ENCODE measurements at regions of chr13 and their contacts with region 1.

Region 1: DNA sequence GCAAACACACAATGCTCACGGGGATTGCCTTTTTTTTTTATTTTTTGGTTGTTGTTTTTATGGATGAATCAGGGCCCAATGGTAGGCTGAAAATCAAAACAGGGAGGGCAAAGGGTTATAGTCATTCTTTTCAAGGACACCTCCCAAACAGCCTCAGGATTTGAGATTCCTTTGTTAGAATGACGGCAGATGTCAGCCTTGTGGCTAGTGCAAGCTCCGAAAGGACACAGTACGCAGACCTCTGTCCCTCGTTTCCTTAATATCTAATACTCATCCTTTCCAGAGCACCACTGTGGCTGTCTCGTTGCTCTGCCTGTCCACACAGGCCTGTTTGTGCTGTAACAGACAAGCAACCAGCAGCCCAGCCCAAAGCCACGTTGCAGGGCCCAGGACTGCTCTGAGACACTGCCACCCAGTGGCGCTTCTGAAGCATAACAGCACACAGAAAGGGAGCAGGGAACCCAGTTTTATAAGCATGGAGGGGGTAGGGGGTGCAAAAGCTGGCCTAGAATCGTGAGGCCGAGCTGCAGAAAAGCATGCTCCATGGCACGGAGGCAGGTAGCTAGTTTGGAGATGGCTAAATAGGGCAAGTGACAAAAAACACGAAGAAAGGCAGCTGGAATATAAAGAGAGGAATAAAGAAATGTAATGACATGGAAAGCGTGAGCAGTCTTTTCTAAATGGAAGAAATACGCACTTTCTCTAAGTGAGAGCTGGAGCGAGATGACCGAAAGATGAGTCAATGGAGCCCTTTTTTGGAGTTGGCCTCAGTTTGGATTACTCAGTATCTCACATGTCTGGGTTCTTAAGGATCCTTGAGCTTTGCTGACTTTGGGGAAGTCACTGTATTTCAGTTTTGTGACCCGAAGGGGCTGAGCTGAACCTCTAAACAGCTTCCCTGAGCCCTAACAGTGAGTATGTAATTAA is 40.7 kb upstream of the MEDAG start:
- DNase-seq: peak; percentile 64 to 81
- ATAC-seq: peak; percentile 95 to 98
- H3K4me3 ChIP-seq: no peak overlapping the region
- H3K27ac ChIP-seq: peak overlapping the region; percentile 68 to 81
- H3K4me1 ChIP-seq: peaks cover 17% of the 10 kb centered on the region
- CTCF ChIP-seq: peak; percentile 65
- EP300 ChIP-seq: no peak
- POLR2A ChIP-seq: no peak
- RAD21 ChIP-seq: peak; percentile 77 to 82

Region 2: DNA sequence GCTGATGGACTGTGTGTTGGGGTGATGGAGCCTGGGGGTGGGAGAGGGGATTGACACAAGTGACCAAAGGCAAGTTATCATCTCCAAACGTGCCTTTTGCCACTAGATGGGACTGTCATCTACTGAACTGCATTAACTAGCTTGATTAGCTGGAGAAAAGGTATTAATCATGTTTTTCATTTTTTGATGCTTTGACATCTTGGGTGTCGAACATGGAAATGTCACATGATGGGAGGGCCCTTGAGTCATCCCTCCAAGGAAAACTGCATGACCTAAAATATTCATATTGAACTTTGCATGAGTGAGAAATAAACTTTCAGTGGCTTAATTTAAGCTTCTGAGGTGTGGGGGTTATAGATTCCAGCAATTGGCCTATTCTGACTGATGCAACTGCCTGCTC is 56.8 kb before region 1 on chr13:
- CTCF ChIA-PET with region 1: interaction called, 14 read pairs
- POLR2A ChIA-PET with region 1: no interaction called
- DNase-seq: no peak
- ATAC-seq: no peak
- H3K4me3 ChIP-seq: no peak overlapping the region
- H3K27ac ChIP-seq: no peak overlapping the region
- H3K4me1 ChIP-seq: no peaks in the 10 kb centered on the region
- CTCF ChIP-seq: no peak
- EP300 ChIP-seq: no peak
- POLR2A ChIP-seq: no peak
- RAD21 ChIP-seq: no peak

Region 3: DNA sequence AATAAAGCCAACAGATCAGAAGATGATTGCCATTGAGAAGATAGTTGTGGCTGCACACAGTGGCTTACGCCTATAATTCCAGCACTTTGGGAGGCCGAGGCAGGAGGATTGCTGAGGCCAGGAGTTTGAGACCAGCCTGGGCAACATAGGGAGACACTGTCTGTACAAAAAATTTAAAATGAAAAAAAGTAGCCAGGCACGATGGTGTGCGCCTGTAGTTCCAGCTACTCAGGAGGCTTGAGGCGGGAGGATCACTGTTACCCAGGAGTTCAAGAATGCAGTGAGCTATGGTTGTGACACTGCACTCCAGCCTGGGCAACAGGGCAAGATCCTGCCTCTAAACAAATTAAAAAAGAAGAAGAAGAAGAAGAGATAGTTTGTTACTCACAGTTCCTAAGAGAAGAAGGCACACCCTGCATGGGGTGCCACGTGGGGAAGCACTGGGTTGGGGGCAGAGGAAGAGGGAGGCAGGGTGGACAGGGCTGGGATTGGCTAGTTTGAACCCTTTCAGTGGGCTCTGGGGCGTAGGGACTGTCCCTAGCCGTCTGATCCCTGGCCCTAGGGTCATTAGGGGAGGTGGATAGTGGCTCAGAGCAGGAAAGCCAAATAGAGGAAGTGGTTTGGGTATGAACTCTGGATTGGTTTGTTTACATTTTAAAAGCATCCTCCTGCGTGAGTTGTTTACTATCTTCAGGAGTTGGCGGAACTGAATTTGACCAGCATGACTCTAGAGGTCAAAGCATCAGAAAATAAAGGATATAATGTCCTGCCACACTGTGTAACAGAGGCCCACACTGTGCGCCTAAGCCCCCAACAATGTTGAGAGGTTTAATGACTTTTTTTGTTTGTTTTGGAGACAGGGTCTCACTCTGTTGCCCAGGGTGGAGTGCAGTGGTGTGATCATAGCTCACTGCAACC is 19.8 kb before region 1 on chr13:
- CTCF ChIA-PET with region 1: interaction called, 11 read pairs
- POLR2A ChIA-PET with region 1: no interaction called
- DNase-seq: no peak
- ATAC-seq: peak; percentile 55 to 73; a peak in 5 of 6 replicates
- H3K4me3 ChIP-seq: no peak overlapping the region
- H3K27ac ChIP-seq: peak overlapping the region in 1 of 2 experiments; percentile 13; a peak in 3 of 6 replicates
- H3K4me1 ChIP-seq: peaks cover 10% of the 10 kb centered on the region; the same call in 1 of the 3 replicates
- CTCF ChIP-seq: no peak
- EP300 ChIP-seq: no peak
- POLR2A ChIP-seq: no peak
- RAD21 ChIP-seq: no peak

Region 4: GRCh38 chr13:31199527-31199848 is 334.1 kb after region 1 on chr13:
- CTCF ChIA-PET with region 1: no interaction called
- POLR2A ChIA-PET with region 1: no interaction called
- DNase-seq: no peak
- ATAC-seq: no peak
- H3K4me3 ChIP-seq: peak overlapping the region; percentile 71; the same call in 2 of the 3 replicates
- H3K27ac ChIP-seq: peak overlapping the region; percentile 96 to 100; a peak in 5 of 6 replicates
- H3K4me1 ChIP-seq: peaks cover 10% of the 10 kb centered on the region
- CTCF ChIP-seq: no peak
- EP300 ChIP-seq: no peak
- POLR2A ChIP-seq: no peak
- RAD21 ChIP-seq: no peak

Region 5: GRCh38 chr13:31476266-31476665 is 610.9 kb after region 1 on chr13:
- CTCF ChIA-PET with region 1: no interaction called
- POLR2A ChIA-PET with region 1: no interaction called
- DNase-seq: no peak
- ATAC-seq: no peak
- H3K4me3 ChIP-seq: no peak overlapping the region
- H3K27ac ChIP-seq: no peak overlapping the region
- H3K4me1 ChIP-seq: no peaks in the 10 kb centered on the region
- CTCF ChIP-seq: no peak
- EP300 ChIP-seq: no peak
- POLR2A ChIP-seq: no peak
- RAD21 ChIP-seq: no peak

Measured in A549 (cell line).